ENCODE measurements at regions of chr2 and their contacts with region 1.

Region 1: GRCh38 chr2:227411320-227411989 is 23.7 kb upstream of the SCYGR1 start:
- DNase-seq: peak; percentile 81
- H3K4me3 Mint-ChIP-seq: peak overlapping the region; percentile 11
- H3K27ac Mint-ChIP-seq: peak overlapping the region; percentile 89
- H3K4me1 Mint-ChIP-seq: peaks cover 57% of the 10 kb centered on the region
- H3K27me3 Mint-ChIP-seq: no peaks in the 10 kb centered on the region

Region 2: GRCh38 chr2:227370791-227371312 is 40.6 kb before region 1 on chr2:
- CTCF ChIA-PET with region 1: interaction called, 3 read pairs
- POLR2A ChIA-PET with region 1: no interaction called
- intact Hi-C with region 1: loop called (anchors 1 kb)
- DNase-seq: peak; percentile 37
- H3K4me3 Mint-ChIP-seq: no peak overlapping the region
- H3K27ac Mint-ChIP-seq: no peak overlapping the region
- H3K4me1 Mint-ChIP-seq: peaks cover 8% of the 10 kb centered on the region
- H3K27me3 Mint-ChIP-seq: no peaks in the 10 kb centered on the region

Region 3: GRCh38 chr2:227423656-227424499 is 12.4 kb after region 1 on chr2:
- CTCF ChIA-PET with region 1: no interaction called
- POLR2A ChIA-PET with region 1: no interaction called
- intact Hi-C with region 1: no loop called
- DNase-seq: no peak
- H3K4me3 Mint-ChIP-seq: no peak overlapping the region
- H3K27ac Mint-ChIP-seq: no peak overlapping the region
- H3K4me1 Mint-ChIP-seq: peaks cover 5% of the 10 kb centered on the region
- H3K27me3 Mint-ChIP-seq: no peaks in the 10 kb centered on the region

Region 4: GRCh38 chr2:227627769-227628168 is 216.3 kb after region 1 on chr2:
- CTCF ChIA-PET with region 1: interaction called, 4 read pairs
- POLR2A ChIA-PET with region 1: no interaction called
- intact Hi-C with region 1: loop called (anchors 5 kb)
- DNase-seq: peak; percentile 58
- H3K4me3 Mint-ChIP-seq: no peak overlapping the region
- H3K27ac Mint-ChIP-seq: no peak overlapping the region
- H3K4me1 Mint-ChIP-seq: no peaks in the 10 kb centered on the region
- H3K27me3 Mint-ChIP-seq: peaks cover 27% of the 10 kb centered on the region